K562 (cell line): ENCODE measurements at regions of chr11 and their contacts with region 1.

Region 1: GRCh38 chr11:61967116-61967923 is at the start of gene FTH1:
- DNase-seq: peak; percentile 90 to 96 (median 92)
- ATAC-seq: peak; percentile 57
- H3K4me3 ChIP-seq: peak within 1 kb of the TSS; percentile 80
- H3K27ac ChIP-seq: peak within 1 kb of the TSS; percentile 89
- H3K4me1 ChIP-seq: peaks cover 46 to 52% of the 10 kb centered on the region in 2 experiments
- H3K27me3 ChIP-seq: no peaks in the 10 kb centered on the region
- CTCF ChIP-seq: no peak
- EP300 ChIP-seq: peak; percentile 54
- POLR2A ChIP-seq: peak; percentile 99
- RAD21 ChIP-seq: peak; percentile 15 to 28; a peak in 1 of 4 replicates
- polyA plus RNA-seq, gene FTH1: 370 to 426 TPM

Region 2: DNA sequence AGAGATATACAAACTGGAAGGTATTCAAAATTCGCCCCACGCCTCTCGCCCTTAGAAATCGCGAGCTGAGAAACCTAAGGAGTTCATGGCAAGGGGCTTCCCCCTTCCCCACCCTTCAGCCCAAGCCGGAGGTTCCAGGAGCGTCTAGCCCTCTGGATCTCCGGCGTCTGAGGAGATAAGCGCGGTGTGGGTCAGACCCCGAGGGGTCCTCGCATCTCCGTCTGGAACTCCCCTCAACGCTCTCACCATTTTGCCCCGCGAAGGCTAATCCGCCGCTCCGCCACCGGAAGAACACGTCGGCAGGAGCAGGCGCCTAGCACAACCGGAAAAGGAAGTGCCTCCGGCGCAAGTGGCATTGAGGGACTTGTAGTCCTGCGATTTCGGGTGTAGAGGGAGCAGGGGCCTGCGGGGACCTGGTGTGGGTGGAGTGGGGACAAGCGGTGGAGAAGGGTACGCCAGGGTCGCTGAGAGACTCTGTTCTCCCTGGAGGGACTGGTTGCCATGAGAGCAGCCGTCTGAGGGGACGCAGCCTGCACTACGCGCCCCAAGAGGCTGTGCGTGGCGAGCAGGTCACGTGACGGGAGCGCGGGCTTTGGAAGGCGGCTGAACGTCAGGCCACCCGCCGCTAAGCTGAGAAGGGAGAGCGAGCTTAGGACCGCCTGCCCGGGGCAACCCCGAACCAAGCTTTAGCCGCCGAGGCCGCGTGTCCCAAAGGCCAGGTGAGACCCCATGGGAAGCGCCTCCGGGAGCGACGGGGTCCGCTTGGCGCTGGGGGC is 174.8 kb before region 1 on chr11 and contains the starts of genes FEN1 and TMEM258:
- CTCF ChIA-PET with region 1: no interaction called
- POLR2A ChIA-PET with region 1: interaction called, 13 read pairs
- in situ Hi-C with region 1: no loop called
- intact Hi-C with region 1: no loop called
- DNase-seq: peak; percentile 89 to 94 (median 90)
- ATAC-seq: peak; percentile 91
- H3K4me3 ChIP-seq: peak within 1 kb of the TSS; percentile 83
- H3K27ac ChIP-seq: peak within 1 kb of the TSS; percentile 100
- H3K4me1 ChIP-seq: peaks cover 16 to 18% of the 10 kb centered on the region in 2 experiments; a peak in 4 of 5 replicates
- H3K27me3 ChIP-seq: no peaks in the 10 kb centered on the region
- CTCF ChIP-seq: no peak
- EP300 ChIP-seq: no peak
- POLR2A ChIP-seq: peak; percentile 94
- RAD21 ChIP-seq: no peak
- polyA plus RNA-seq, gene FEN1: 58.1 to 86.8 TPM
- polyA plus RNA-seq, gene TMEM258: 794 to 856 TPM

Region 3: GRCh38 chr11:61899146-61899841 is 68.0 kb before region 1 on chr11:
- CTCF ChIA-PET with region 1: no interaction called
- POLR2A ChIA-PET with region 1: interaction called, 109 read pairs
- in situ Hi-C with region 1: no loop called
- intact Hi-C with region 1: no loop called
- DNase-seq: peak; percentile 89 to 94 (median 94)
- ATAC-seq: peak; percentile 93
- H3K4me3 ChIP-seq: no peak overlapping the region
- H3K27ac ChIP-seq: no peak overlapping the region
- H3K4me1 ChIP-seq: peaks cover 4 to 34% of the 10 kb centered on the region in 2 experiments; a peak in 4 of 5 replicates
- H3K27me3 ChIP-seq: no peaks in the 10 kb centered on the region
- CTCF ChIP-seq: peak; percentile 99
- EP300 ChIP-seq: no peak
- POLR2A ChIP-seq: no peak
- RAD21 ChIP-seq: peak; percentile 97 to 99

Region 4: GRCh38 chr11:61985885-61986345 is 18.6 kb after region 1 on chr11:
- CTCF ChIA-PET with region 1: no interaction called
- POLR2A ChIA-PET with region 1: interaction called, 65 read pairs
- in situ Hi-C with region 1: no loop called
- intact Hi-C with region 1: no loop called
- DNase-seq: no peak
- ATAC-seq: no peak
- H3K4me3 ChIP-seq: no peak overlapping the region
- H3K27ac ChIP-seq: no peak overlapping the region
- H3K4me1 ChIP-seq: peaks cover 0 to 2% of the 10 kb centered on the region in 2 experiments; a peak in 2 of 5 replicates
- H3K27me3 ChIP-seq: no peaks in the 10 kb centered on the region
- CTCF ChIP-seq: no peak
- EP300 ChIP-seq: no peak
- POLR2A ChIP-seq: no peak
- RAD21 ChIP-seq: no peak

Region 5: DNA sequence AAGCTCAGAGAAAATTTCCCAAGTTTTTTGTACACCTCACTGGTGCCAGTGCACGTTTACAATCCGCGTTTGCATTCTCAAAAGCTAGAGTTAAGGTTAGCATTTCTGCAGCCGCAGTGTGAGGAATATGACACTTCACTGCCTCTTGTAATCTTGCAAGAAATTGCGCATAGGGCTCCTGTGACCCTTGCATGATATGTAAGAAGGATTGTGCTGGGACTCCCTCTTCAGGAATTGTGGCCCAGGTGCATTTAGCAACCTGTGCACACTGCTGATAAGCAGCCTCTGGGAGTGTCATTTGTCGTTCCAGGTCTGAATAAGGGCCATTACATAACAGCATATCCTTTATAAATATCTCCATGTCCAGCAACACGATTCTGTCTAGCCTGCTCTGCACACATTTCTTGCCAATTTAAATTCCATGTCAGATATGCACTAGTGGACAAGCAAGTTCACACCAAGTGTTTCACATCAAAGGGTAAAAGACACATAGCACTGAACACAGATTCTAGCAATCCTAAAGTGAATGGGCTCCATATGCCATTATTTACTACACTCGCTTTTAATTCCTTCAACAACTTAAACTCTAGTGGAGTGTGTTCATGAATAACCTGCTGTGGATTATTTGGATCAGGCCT is 87.3 kb after region 1 on chr11:
- CTCF ChIA-PET with region 1: interaction called, 3 read pairs
- POLR2A ChIA-PET with region 1: interaction called, 51 read pairs
- in situ Hi-C with region 1: no loop called
- intact Hi-C with region 1: loop called (anchors 5 kb)
- DNase-seq: peak in 2 of 4 experiments; percentile 58 to 81
- ATAC-seq: peak; percentile 87
- H3K4me3 ChIP-seq: no peak overlapping the region
- H3K27ac ChIP-seq: no peak overlapping the region
- H3K4me1 ChIP-seq: peaks cover 0 to 9% of the 10 kb centered on the region in 2 experiments; a peak in 2 of 5 replicates
- H3K27me3 ChIP-seq: no peaks in the 10 kb centered on the region
- CTCF ChIP-seq: peak; percentile 70 to 93 (median 73)
- EP300 ChIP-seq: peak; percentile 62
- POLR2A ChIP-seq: no peak
- RAD21 ChIP-seq: peak; percentile 91 to 96

Region 6: GRCh38 chr11:62108017-62108750 is 140.9 kb after region 1 on chr11:
- CTCF ChIA-PET with region 1: no interaction called
- POLR2A ChIA-PET with region 1: interaction called, 110 read pairs
- in situ Hi-C with region 1: no loop called
- intact Hi-C with region 1: no loop called
- DNase-seq: peak; percentile 44 to 80 (median 48)
- ATAC-seq: peak; percentile 74
- H3K4me3 ChIP-seq: no peak overlapping the region
- H3K27ac ChIP-seq: no peak overlapping the region
- H3K4me1 ChIP-seq: peaks cover 7 to 16% of the 10 kb centered on the region in 2 experiments
- H3K27me3 ChIP-seq: no peaks in the 10 kb centered on the region
- CTCF ChIP-seq: peak; percentile 74 to 92 (median 79)
- EP300 ChIP-seq: no peak
- POLR2A ChIP-seq: no peak
- RAD21 ChIP-seq: peak; percentile 92